H1 (cell line): ENCODE measurements at regions of chr3 and their contacts with region 1.

Region 1: DNA sequence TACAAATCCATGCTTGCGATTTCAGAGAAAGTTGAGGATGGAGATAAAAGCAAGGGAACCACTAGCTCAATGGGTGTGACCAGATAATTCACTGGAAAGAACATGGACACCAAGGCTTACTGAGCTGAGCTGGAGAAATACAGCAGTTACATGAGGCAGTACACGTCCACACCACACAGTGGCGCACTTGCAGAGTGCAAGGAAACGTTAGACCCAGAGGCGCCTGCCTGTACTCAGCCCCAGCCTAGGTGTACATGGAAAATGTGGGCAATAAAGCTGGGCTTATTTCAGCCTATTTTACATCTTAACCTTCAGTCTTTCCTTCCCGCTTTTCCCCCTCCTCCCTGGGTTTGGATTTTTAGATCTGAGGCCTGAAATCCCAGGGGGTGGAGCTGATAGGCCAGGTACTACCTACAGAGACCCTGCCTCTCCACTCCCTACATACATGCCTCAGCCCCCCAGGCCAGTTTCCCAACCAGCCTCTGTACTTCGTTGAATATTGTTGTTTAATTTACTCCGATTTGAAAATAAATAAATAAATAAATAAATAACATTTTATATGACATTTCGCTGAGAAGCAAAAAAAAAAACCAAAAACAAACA is 60.1 kb downstream of the PCOLCE2 start:
- DNase-seq: peak; percentile 47 to 92
- H3K4me3 ChIP-seq: no peak overlapping the region
- H3K27ac ChIP-seq: no peak overlapping the region
- H3K4me1 ChIP-seq: no peaks in the 10 kb centered on the region
- H3K27me3 ChIP-seq: no peaks in the 10 kb centered on the region
- CTCF ChIP-seq: peak; percentile 95 to 99 (median 97)
- EP300 ChIP-seq: no peak
- POLR2A ChIP-seq: no peak
- RAD21 ChIP-seq: peak; percentile 97

Region 2: GRCh38 chr3:142802891-142803290 is 25.9 kb before region 1 on chr3:
- CTCF ChIA-PET with region 1: interaction called, 13 read pairs
- POLR2A ChIA-PET with region 1: no interaction called
- DNase-seq: no peak
- H3K4me3 ChIP-seq: no peak overlapping the region
- H3K27ac ChIP-seq: no peak overlapping the region
- H3K4me1 ChIP-seq: no peaks in the 10 kb centered on the region; a peak in 1 of 7 replicates
- H3K27me3 ChIP-seq: no peaks in the 10 kb centered on the region
- CTCF ChIP-seq: no peak
- EP300 ChIP-seq: no peak
- POLR2A ChIP-seq: no peak
- RAD21 ChIP-seq: no peak

Region 3: GRCh38 chr3:142844339-142844977 is 15.7 kb after region 1 on chr3:
- CTCF ChIA-PET with region 1: interaction called, 30 read pairs
- POLR2A ChIA-PET with region 1: interaction called, 4 read pairs
- DNase-seq: no peak
- H3K4me3 ChIP-seq: no peak overlapping the region
- H3K27ac ChIP-seq: no peak overlapping the region
- H3K4me1 ChIP-seq: no peaks in the 10 kb centered on the region
- H3K27me3 ChIP-seq: no peaks in the 10 kb centered on the region
- CTCF ChIP-seq: peak in 2 of 3 experiments; percentile 42 to 59; a peak in 2 of 4 replicates
- EP300 ChIP-seq: no peak
- POLR2A ChIP-seq: no peak
- RAD21 ChIP-seq: peak; percentile 44 to 59

Region 4: GRCh38 chr3:142888481-142889211 is 59.8 kb after region 1 on chr3 and contains the start of gene PCOLCE2:
- CTCF ChIA-PET with region 1: interaction called, 11 read pairs
- POLR2A ChIA-PET with region 1: interaction called, 4 read pairs
- DNase-seq: peak in 1 of 2 experiments; percentile 86
- H3K4me3 ChIP-seq: peak within 1 kb of the TSS; percentile 47 to 71 (median 64)
- H3K27ac ChIP-seq: no peak within 1 kb of the TSS
- H3K4me1 ChIP-seq: peaks cover 0 to 4% (median 2%) of the 10 kb centered on the region in 4 experiments; a peak in 3 of 7 replicates
- H3K27me3 ChIP-seq: peaks cover 0 to 8% (median 5%) of the 10 kb centered on the region in 4 experiments; a peak in 5 of 7 replicates
- CTCF ChIP-seq: no peak
- EP300 ChIP-seq: no peak
- POLR2A ChIP-seq: peak; percentile 67 to 87
- RAD21 ChIP-seq: 0 out of 4 replicates have a peak, but pooled peaks of 1 of the 2 experiments have one; percentile 0
- total RNA-seq, gene PCOLCE2: 11.6 and 12.6 TPM in 2 replicates

Region 5: GRCh38 chr3:142912402-142913172 is 83.8 kb after region 1 on chr3:
- CTCF ChIA-PET with region 1: interaction called, 115 read pairs
- POLR2A ChIA-PET with region 1: no interaction called
- DNase-seq: no peak
- H3K4me3 ChIP-seq: no peak overlapping the region
- H3K27ac ChIP-seq: no peak overlapping the region
- H3K4me1 ChIP-seq: no peaks in the 10 kb centered on the region
- H3K27me3 ChIP-seq: no peaks in the 10 kb centered on the region
- CTCF ChIP-seq: no peak
- EP300 ChIP-seq: no peak
- POLR2A ChIP-seq: no peak
- RAD21 ChIP-seq: no peak

Region 6: DNA sequence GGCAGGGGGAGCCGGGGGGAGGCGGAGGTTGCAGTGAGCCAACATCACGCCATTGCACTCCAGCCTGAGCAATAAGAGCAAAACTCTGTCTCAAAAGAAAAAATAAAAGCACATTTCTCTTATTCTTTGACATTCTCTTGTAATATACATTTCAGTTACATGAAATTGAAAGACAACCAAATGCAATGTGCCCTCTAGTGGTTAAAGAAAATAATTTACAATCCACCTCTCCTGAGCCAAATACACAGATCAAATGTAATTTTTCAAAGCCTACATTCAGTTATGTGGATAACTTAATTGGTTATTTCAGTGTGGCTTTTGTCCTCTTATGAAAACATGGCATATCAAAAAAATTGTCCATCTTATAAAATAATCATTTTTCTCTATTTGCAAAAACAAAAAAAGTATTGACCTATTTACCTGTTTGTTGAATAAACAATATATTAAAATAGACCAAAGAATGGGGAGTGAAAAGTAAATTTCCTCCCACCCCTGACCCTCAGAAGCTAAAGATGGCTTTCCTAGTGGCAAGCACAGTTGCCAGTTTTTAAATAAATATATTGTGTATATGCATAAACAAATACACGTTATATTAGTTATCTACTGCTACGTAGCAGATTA is 158.4 kb after region 1 on chr3:
- CTCF ChIA-PET with region 1: interaction called, 122 read pairs
- POLR2A ChIA-PET with region 1: no interaction called
- DNase-seq: no peak
- H3K4me3 ChIP-seq: no peak overlapping the region
- H3K27ac ChIP-seq: no peak overlapping the region
- H3K4me1 ChIP-seq: peaks cover 0 to 3% (median under 1%) of the 10 kb centered on the region in 4 experiments; a peak in 3 of 7 replicates
- H3K27me3 ChIP-seq: no peaks in the 10 kb centered on the region
- CTCF ChIP-seq: peak in 2 of 3 experiments; percentile 38 to 53; a peak in 2 of 4 replicates
- EP300 ChIP-seq: no peak
- POLR2A ChIP-seq: no peak
- RAD21 ChIP-seq: peak in 1 of 2 experiments; percentile 43; a peak in 3 of 4 replicates